HepG2 (cell line): ENCODE measurements at regions of chr13 and their contacts with region 1.

Region 1: DNA sequence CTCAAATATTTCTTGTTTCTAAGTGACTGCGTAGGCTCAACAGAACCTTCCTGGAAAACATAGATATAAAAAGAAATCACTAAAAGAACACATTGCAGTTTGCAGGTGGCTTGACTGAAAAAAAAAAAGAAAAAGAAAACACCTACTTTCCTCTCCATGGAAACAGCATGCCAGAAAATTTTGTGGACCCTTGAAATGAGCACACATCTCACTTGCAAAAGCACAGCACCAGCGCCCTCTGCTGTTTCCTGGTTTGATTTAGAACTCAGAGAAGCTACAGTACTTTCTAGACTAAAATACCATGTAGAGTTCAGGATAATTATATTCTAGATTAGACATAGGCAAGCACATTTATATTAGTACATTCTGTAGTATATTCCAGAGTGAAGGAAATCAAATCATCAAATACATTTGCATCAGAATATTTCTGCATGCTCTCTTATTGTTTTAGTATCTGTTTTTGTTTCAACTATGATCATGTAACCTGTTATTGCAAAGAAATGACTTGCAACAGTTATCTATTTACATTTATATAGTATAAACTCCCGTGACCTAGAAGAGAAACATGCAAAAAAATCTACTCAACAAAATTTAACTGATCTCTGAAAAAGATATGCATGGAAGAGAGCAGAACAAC is 22.3 kb upstream of the XPO4 start:
- DNase-seq: peak; percentile 82
- ATAC-seq: peak; percentile 66
- H3K4me3 ChIP-seq: no peak overlapping the region
- H3K27ac ChIP-seq: no peak overlapping the region
- H3K4me1 ChIP-seq: peaks cover 31% of the 10 kb centered on the region
- H3K27me3 ChIP-seq: no peaks in the 10 kb centered on the region
- CTCF ChIP-seq: peak; percentile 79
- EP300 ChIP-seq: no peak
- POLR2A ChIP-seq: no peak
- RAD21 ChIP-seq: peak; percentile 42; the same call in 1 of the 2 replicates

Region 2: GRCh38 chr13:20197361-20197834 is 727.5 kb before region 1 on chr13:
- CTCF ChIA-PET with region 1: no interaction called
- POLR2A ChIA-PET with region 1: no interaction called
- in situ Hi-C with region 1: no loop called
- intact Hi-C with region 1: loop called (anchors 5 kb)
- DNase-seq: peak; percentile 41
- ATAC-seq: peak; percentile 60
- H3K4me3 ChIP-seq: no peak overlapping the region
- H3K27ac ChIP-seq: no peak overlapping the region
- H3K4me1 ChIP-seq: peaks cover 23% of the 10 kb centered on the region
- H3K27me3 ChIP-seq: peaks cover 3 to 23% of the 10 kb centered on the region in 2 experiments; a peak in 4 of 5 replicates
- CTCF ChIP-seq: peak; percentile 64
- EP300 ChIP-seq: no peak
- POLR2A ChIP-seq: no peak
- RAD21 ChIP-seq: no peak

Region 3: DNA sequence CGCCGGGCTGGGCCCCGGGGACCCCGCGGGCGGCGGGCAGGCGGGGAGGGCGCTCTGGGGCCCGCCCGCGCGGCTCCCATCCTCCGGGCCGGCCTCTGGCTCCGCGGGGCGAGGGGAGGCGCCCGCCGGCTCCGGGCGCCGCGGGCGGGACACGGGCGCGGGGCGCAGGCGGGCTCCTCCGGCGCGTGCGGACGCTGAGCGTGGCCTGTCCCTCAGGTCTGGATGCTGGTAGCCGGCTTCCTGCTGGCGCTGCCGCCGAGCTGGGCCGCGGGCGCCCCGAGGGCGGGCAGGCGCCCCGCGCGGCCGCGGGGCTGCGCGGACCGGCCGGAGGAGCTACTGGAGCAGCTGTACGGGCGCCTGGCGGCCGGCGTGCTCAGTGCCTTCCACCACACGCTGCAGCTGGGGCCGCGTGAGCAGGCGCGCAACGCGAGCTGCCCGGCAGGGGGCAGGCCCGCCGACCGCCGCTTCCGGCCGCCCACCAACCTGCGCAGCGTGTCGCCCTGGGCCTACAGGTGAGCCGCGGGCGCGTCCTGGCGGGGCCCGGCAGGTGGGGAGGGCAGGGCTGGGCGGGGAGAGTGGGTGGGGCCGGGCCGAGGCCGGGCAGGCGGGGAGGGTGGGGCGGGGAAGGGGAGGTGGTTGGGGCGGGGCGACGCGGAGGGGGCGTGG is 221.0 kb before region 1 on chr13:
- CTCF ChIA-PET with region 1: no interaction called
- POLR2A ChIA-PET with region 1: no interaction called
- in situ Hi-C with region 1: loop called (anchors 10 kb)
- intact Hi-C with region 1: no loop called
- DNase-seq: peak; percentile 58
- ATAC-seq: peak; percentile 91
- H3K4me3 ChIP-seq: peak overlapping the region; percentile 16 to 62 (median 48); a peak in 4 of 6 replicates
- H3K27ac ChIP-seq: no peak overlapping the region
- H3K4me1 ChIP-seq: peaks cover 37% of the 10 kb centered on the region
- H3K27me3 ChIP-seq: no peaks in the 10 kb centered on the region
- CTCF ChIP-seq: peak; percentile 56; the same call in 1 of the 2 replicates
- EP300 ChIP-seq: no peak
- POLR2A ChIP-seq: peak; percentile 32 to 61; a peak in 1 of 4 replicates
- RAD21 ChIP-seq: peak; percentile 70

Region 4: DNA sequence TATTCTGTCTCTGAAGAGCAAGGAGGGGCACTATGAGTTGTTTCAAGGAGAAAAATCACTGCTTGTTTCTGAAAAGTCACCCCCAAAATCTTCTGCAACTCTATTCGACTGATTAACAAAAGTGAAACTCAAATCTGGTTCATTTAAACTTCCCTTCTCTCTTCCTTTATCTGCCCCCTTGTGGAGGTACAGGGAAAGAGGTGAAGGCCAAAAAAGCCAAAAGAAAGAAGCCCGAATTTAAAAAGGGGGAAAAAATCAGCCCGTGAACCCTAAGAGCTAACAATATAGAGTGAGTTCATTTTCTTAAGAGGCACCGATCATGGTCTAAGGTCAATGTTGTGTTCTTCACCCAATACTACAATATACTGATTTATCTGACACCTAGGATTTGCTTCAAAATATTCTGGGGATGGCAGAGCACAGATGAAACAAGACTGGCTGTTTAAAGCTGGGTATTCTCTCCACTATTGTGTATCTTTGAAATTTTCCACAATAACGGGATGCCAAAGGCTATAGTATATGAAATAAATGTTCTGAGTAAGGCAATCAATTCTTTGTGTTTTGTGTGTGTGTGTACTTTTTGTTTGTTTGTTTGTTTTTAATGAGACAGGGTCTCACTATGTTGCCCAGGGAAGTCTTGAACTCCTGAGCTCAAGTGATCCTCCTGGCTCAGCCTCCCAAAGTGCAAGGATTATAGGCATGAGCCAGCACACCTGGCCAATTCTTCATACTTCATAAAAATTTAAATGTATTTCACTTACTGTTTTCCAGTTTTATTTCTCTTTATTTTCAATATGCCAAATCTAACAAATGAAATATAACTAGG is 96.1 kb before region 1 on chr13:
- CTCF ChIA-PET with region 1: interaction called, 3 read pairs
- POLR2A ChIA-PET with region 1: no interaction called
- in situ Hi-C with region 1: no loop called
- intact Hi-C with region 1: loop called (anchors 2 kb)
- DNase-seq: peak; percentile 38
- ATAC-seq: peak; percentile 50
- H3K4me3 ChIP-seq: 0 out of 6 replicates have a peak overlapping the region, but pooled peaks of 1 of the 3 experiments have one; percentile 27
- H3K27ac ChIP-seq: no peak overlapping the region
- H3K4me1 ChIP-seq: peaks cover 8% of the 10 kb centered on the region; the same call in 1 of the 2 replicates
- H3K27me3 ChIP-seq: no peaks in the 10 kb centered on the region; a peak in 1 of 5 replicates
- CTCF ChIP-seq: peak; percentile 68
- EP300 ChIP-seq: no peak
- POLR2A ChIP-seq: no peak
- RAD21 ChIP-seq: 0 out of 2 replicates have a peak, but pooled peaks have one; percentile 25

Region 5: GRCh38 chr13:20843166-20843565 is 81.7 kb before region 1 on chr13:
- CTCF ChIA-PET with region 1: no interaction called
- POLR2A ChIA-PET with region 1: no interaction called
- in situ Hi-C with region 1: no loop called
- intact Hi-C with region 1: no loop called
- DNase-seq: no peak
- ATAC-seq: no peak
- H3K4me3 ChIP-seq: no peak overlapping the region
- H3K27ac ChIP-seq: no peak overlapping the region
- H3K4me1 ChIP-seq: peaks cover 1% of the 10 kb centered on the region
- H3K27me3 ChIP-seq: no peaks in the 10 kb centered on the region
- CTCF ChIP-seq: no peak
- EP300 ChIP-seq: no peak
- POLR2A ChIP-seq: no peak
- RAD21 ChIP-seq: no peak

Region 6: GRCh38 chr13:20902438-20903163 is 22.3 kb before region 1 on chr13 and contains the start of gene XPO4:
- CTCF ChIA-PET with region 1: no interaction called
- POLR2A ChIA-PET with region 1: interaction called, 11 read pairs
- in situ Hi-C with region 1: no loop called
- intact Hi-C with region 1: no loop called
- DNase-seq: peak; percentile 59
- ATAC-seq: peak; percentile 93
- H3K4me3 ChIP-seq: peak within 1 kb of the TSS; percentile 70 to 92 (median 83)
- H3K27ac ChIP-seq: peak within 1 kb of the TSS; percentile 91
- H3K4me1 ChIP-seq: peaks cover 53% of the 10 kb centered on the region
- H3K27me3 ChIP-seq: no peaks in the 10 kb centered on the region; a peak in 1 of 5 replicates
- CTCF ChIP-seq: no peak
- EP300 ChIP-seq: no peak
- POLR2A ChIP-seq: peak in 1 of 2 experiments; percentile 52; a peak in 3 of 4 replicates
- RAD21 ChIP-seq: no peak; the same call in 1 of the 2 replicates
- total RNA-seq, gene XPO4: 24.8 and 41.5 TPM in 2 replicates